Posterior vena cava (tissue), 2 donors: ENCODE measurements at regions of chr5 and their contacts with region 1.

Region 1: DNA sequence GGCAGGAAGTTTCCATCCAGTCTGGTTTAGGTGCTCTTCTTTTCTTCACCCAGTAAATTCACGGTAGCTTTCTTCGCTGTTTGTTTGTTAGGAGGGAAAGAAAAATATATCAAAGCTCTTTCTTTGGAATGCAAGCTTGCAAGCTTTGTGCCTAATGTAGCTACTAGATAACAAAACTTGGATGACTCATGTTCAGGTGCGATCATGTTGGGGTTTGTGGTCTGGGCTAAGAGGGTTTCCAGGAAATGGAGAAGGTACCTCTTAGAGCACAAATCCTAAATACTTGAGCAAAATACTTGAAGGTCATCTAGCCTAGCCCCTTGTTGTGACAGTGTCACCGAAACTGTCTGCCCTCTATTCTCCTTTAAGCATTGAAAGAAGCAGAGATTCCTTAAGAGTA is 17.7 kb downstream of the SRP19 start:
- DNase-seq: no peak

Region 2: GRCh38 chr5:112921833-112922817 is 43.4 kb after region 1 on chr5 and contains the start of gene REEP5:
- intact Hi-C with region 1: loop called in 1 of 2 experiments (anchors 10 kb)
- DNase-seq: peak; percentile 95
- total RNA-seq, gene REEP5: 63.8 to 76.3 TPM

Region 3: DNA sequence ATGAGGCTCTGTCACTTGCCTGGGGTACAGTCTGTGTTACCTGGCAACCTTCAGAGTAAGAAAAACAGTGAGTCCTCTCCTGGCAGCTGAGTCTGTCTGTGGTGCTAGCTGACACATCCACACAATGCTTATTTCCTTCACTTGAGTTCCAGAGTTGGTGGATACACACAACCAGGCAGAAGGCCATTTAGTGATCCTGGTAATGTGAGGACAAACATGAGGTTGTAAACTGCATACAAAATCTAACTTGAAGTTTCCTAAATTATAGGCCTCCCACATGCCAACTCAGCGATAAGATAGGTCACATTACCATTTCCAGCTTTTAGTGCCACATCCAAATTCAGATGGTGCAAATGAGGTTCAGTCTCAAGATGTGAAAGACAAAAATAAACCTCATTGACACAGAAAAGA is 223.4 kb after region 1 on chr5:
- intact Hi-C with region 1: no loop called
- DNase-seq: no peak